ENCODE measurements at regions of chr22 and their contacts with region 1.

Region 1: DNA sequence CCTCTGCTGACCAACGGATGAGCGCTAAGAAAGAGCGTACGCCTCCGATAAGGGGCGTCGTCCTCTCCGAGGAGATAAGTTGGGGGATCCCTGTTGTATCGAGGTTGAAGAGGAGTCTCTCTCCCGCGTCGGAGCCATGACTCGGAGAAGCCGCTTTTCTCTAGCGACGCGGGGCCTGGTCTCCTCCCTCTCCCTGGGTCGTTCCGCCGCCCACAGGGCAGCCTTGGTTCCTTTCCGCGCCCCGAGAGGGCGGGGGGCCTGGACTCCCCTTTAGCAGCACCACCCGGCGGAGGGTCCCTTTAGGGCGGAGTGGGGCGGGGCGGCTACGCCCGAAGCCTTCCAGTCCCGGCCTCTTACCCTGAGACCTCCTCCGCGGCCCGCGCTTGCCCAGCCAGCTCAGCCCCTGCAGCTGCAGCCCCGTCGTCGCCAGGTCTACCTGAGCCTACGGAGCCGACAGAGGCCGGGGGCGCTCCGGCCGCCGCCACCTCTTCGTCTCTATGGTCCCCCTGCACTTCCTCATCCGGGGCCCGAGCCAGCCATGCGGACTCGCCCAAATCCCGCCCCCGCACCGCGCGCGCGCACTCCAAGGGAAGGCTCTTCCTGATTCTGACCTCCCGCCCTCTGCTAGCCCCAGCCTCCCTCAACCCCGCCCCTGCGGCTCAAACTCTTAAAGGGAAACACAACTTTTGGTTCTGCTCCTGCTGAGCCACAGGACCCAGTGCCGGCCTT is at the start of gene PRR14L:
- DNase-seq: peak; percentile 99
- H3K4me3 ChIP-seq: peak within 1 kb of the TSS; percentile 88 to 98 (median 94)
- H3K27ac ChIP-seq: peak within 1 kb of the TSS; percentile 86 to 92 (median 90)
- H3K4me1 ChIP-seq: peaks cover 0 to 45% (median 41%) of the 10 kb centered on the region in 4 donors
- H3K27me3 ChIP-seq: no peaks in the 10 kb centered on the region
- CTCF ChIP-seq: no peak
- EP300 ChIP-seq: peak in 1 of 4 donors; percentile 59
- POLR2A ChIP-seq: peak; percentile 55 to 77
- total RNA-seq, gene PRR14L: 10.2 to 24.4 (median 14.5) TPM

Region 2: DNA sequence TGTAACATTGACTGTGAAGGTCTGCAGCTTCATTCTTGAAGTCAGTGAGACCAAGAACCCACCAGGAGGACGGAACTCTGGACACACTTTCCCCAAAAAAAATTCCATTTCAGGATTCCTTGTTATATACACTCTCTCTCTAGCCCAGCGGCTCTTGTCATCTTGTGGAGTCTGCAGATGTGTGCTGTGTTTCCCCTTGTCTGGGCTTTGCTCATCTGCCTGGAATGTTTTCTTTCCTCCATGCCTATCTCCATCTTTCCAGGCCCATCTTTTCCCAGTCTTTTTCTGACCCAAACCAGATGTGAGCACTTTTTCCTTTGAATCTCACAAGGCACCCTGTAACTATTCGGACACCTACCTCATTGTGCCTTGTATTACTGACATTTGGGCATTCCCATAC is 355.5 kb before region 1 on chr22:
- intact Hi-C with region 1: no loop called
- DNase-seq: no peak
- H3K4me3 ChIP-seq: no peak overlapping the region
- H3K27ac ChIP-seq: no peak overlapping the region
- H3K4me1 ChIP-seq: peaks cover 0 to 6% (median 3%) of the 10 kb centered on the region in 4 donors
- H3K27me3 ChIP-seq: no peaks in the 10 kb centered on the region
- CTCF ChIP-seq: no peak
- EP300 ChIP-seq: no peak
- POLR2A ChIP-seq: no peak

Region 3: GRCh38 chr22:31661851-31662656 is 87.7 kb before region 1 on chr22 and contains the start of gene PISD:
- intact Hi-C with region 1: loop called (anchors 2 kb)
- DNase-seq: peak; percentile 97
- H3K4me3 ChIP-seq: peak within 1 kb of the TSS; percentile 64 to 94 (median 80)
- H3K27ac ChIP-seq: peak within 1 kb of the TSS; percentile 74 to 78 (median 76)
- H3K4me1 ChIP-seq: peaks cover 0 to 19% (median 13%) of the 10 kb centered on the region in 4 donors
- H3K27me3 ChIP-seq: no peaks in the 10 kb centered on the region
- CTCF ChIP-seq: no peak
- EP300 ChIP-seq: no peak
- POLR2A ChIP-seq: peak; percentile 6 to 50
- total RNA-seq, gene PISD: 17.3 to 40.3 (median 26.6) TPM

Measured in sigmoid colon (tissue), 7 donors.